ENCODE measurements at regions of chr5 and their contacts with region 1.

Region 1: DNA sequence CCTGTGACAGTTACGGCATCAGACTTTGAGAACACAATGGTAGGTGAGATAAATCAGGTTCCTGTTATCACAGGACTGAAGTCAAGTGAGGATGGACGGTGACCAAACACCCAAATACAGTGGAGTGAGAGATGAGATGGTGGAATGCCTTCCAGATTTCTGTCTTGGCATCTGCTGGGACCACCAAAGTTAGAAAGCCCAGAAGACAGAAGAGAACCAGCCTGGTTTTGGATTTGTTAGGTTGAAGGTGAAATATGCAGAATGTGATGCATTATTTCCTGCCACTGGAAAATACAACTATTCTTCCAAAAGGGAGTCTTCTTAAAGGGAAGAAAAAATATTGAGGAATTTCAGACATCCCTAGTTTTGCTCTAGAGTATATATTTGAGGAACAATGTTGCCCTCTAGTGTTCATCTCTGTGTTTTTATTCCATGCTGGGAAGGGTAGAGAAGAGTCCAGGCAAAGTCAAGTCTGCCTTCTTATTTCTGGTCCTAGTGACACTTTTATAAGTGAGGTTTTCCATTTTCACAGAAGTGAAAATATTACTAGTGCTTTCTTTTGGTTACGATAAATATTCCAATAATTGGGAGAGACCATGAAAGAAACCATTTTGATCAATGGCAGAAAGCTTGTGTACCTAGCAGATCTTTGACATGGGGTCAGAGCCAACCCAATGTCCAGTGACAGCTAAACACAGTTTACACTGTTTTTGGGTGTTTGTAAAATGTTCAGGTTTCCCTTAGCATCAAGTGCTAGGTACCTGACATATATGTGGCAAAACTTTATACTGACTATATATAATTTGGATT is 142.3 kb upstream of the ANKH start:
- DNase-seq: peak; percentile 59
- ATAC-seq: peak; percentile 57
- H3K4me3 ChIP-seq: no peak overlapping the region
- H3K4me3 Mint-ChIP-seq: no peak overlapping the region
- H3K27ac ChIP-seq: no peak overlapping the region
- H3K27ac Mint-ChIP-seq: no peak overlapping the region
- H3K4me1 ChIP-seq: no peaks in the 10 kb centered on the region
- H3K4me1 Mint-ChIP-seq: no peaks in the 10 kb centered on the region
- H3K27me3 ChIP-seq: peaks cover 0 to 3% (median 0%) of the 10 kb centered on the region in 4 experiments
- H3K27me3 Mint-ChIP-seq: peaks cover 9% of the 10 kb centered on the region
- CTCF ChIP-seq: peak; percentile 76

Region 2: DNA sequence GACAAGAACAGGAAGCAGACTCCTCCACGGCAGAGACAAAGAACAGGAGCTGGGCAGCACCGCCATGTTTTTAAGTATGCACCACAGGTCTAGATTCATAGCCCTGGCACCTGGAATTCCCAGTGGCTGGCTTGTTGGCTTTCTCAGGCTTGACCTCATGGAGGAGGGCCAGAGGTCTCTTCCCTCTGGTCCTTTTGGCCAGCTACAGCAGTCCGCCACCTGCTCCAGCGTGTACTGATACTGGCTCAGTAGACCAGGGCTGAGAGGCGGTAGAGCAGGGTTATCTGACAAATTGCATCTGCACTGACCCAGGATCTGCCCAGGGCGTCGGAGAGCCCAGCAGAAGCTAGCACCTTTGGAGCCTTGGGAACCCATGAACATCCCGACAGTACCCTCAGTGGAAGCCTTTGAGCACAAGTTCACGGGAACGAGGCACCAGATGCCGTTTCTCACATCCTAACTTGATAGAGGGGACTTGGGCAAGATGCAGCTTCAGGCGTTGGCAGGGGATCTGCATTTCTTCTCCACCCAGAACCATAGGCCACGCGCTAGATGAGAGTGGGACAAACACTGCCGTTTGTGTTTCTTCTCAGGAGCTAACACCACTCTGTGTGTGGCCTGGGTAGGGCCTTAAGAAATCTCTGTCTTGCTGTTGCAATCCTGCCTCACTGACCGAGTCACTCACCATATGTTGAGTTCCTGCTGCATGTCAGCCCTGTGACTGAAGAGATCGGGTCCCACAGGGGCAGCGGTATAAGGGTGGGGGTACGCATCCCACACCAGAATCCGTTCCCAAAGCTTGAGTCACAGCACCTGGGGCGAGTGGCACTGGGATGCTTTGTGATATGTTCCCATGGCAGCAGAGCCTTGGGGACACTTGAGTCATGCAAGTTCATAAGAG is 522.6 kb before region 1 on chr5:
- CTCF ChIA-PET with region 1: no interaction called
- POLR2A ChIA-PET with region 1: no interaction called
- intact Hi-C with region 1: no loop called
- DNase-seq: no peak
- ATAC-seq: no peak
- H3K4me3 ChIP-seq: no peak overlapping the region
- H3K4me3 Mint-ChIP-seq: no peak overlapping the region
- H3K27ac ChIP-seq: no peak overlapping the region
- H3K27ac Mint-ChIP-seq: no peak overlapping the region
- H3K4me1 ChIP-seq: no peaks in the 10 kb centered on the region
- H3K4me1 Mint-ChIP-seq: no peaks in the 10 kb centered on the region
- H3K27me3 ChIP-seq: no peaks in the 10 kb centered on the region
- H3K27me3 Mint-ChIP-seq: no peaks in the 10 kb centered on the region
- CTCF ChIP-seq: no peak

Region 3: GRCh38 chr5:14685757-14686156 is 328.1 kb before region 1 on chr5:
- CTCF ChIA-PET with region 1: interaction called, 15 read pairs
- POLR2A ChIA-PET with region 1: no interaction called
- intact Hi-C with region 1: no loop called
- DNase-seq: peak; percentile 70
- ATAC-seq: peak; percentile 79
- H3K4me3 ChIP-seq: no peak overlapping the region
- H3K4me3 Mint-ChIP-seq: peak overlapping the region; percentile 8
- H3K27ac ChIP-seq: no peak overlapping the region
- H3K27ac Mint-ChIP-seq: no peak overlapping the region
- H3K4me1 ChIP-seq: peaks cover 5 to 10% of the 10 kb centered on the region in 2 donors
- H3K4me1 Mint-ChIP-seq: peaks cover 9% of the 10 kb centered on the region
- H3K27me3 ChIP-seq: no peaks in the 10 kb centered on the region
- H3K27me3 Mint-ChIP-seq: no peaks in the 10 kb centered on the region
- CTCF ChIP-seq: peak; percentile 74

Region 4: GRCh38 chr5:14768508-14769365 is 245.1 kb before region 1 on chr5:
- CTCF ChIA-PET with region 1: no interaction called
- POLR2A ChIA-PET with region 1: no interaction called
- intact Hi-C with region 1: no loop called
- DNase-seq: no peak
- ATAC-seq: no peak
- H3K4me3 ChIP-seq: no peak overlapping the region
- H3K4me3 Mint-ChIP-seq: no peak overlapping the region
- H3K27ac ChIP-seq: no peak overlapping the region
- H3K27ac Mint-ChIP-seq: no peak overlapping the region
- H3K4me1 ChIP-seq: no peaks in the 10 kb centered on the region
- H3K4me1 Mint-ChIP-seq: peaks cover 14% of the 10 kb centered on the region
- H3K27me3 ChIP-seq: no peaks in the 10 kb centered on the region
- H3K27me3 Mint-ChIP-seq: no peaks in the 10 kb centered on the region
- CTCF ChIP-seq: no peak

Region 5: GRCh38 chr5:14958196-14958595 is 55.7 kb before region 1 on chr5:
- CTCF ChIA-PET with region 1: interaction called, 19 read pairs
- POLR2A ChIA-PET with region 1: no interaction called
- intact Hi-C with region 1: no loop called
- DNase-seq: no peak
- ATAC-seq: no peak
- H3K4me3 ChIP-seq: no peak overlapping the region
- H3K4me3 Mint-ChIP-seq: no peak overlapping the region
- H3K27ac ChIP-seq: no peak overlapping the region
- H3K27ac Mint-ChIP-seq: no peak overlapping the region
- H3K4me1 ChIP-seq: no peaks in the 10 kb centered on the region
- H3K4me1 Mint-ChIP-seq: no peaks in the 10 kb centered on the region
- H3K27me3 ChIP-seq: no peaks in the 10 kb centered on the region
- H3K27me3 Mint-ChIP-seq: peaks cover 5% of the 10 kb centered on the region
- CTCF ChIP-seq: no peak

Region 6: DNA sequence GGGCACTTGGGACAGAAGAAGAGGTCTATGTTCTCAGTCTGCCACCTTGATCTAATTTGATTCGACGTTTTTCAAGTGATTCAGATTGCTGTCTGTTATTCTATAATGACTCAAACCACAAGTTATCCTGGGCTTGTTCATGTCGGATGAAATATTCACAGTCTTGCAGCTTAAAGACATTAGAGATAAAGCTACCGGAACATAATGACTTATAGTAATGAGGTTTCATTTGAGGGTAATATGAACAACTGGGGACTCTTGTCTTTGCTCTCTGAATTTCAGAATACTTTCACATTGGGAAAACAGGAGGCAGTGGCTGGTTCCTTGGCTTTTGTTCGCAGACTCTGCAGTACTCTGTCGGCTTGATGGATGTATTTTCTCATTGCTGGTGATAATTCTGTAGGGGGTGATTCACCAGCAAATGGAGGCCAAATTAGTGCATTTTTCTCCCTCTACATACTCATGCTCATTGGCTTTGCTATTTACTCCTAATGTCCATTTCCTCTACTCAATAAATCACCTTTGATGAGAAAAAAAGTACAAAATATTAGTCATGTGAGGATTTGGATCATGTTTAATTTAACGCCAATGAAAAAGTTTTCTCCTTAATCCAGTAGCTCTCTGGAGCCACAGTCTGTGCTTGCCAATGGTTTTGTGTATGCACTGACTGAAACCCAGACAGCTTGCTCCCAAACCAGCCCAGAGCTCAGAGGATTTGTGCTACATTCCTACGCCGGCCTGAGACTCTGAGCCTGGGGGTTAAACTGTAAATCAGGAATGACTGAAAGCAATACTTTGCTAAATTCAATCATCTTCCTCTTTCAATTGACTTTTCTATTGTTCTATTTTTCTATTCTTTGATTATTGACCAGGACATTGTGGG is 12.4 kb after region 1 on chr5:
- CTCF ChIA-PET with region 1: interaction called, 12 read pairs
- POLR2A ChIA-PET with region 1: no interaction called
- intact Hi-C with region 1: no loop called
- DNase-seq: no peak
- ATAC-seq: no peak
- H3K4me3 ChIP-seq: no peak overlapping the region
- H3K4me3 Mint-ChIP-seq: no peak overlapping the region
- H3K27ac ChIP-seq: no peak overlapping the region
- H3K27ac Mint-ChIP-seq: no peak overlapping the region
- H3K4me1 ChIP-seq: no peaks in the 10 kb centered on the region
- H3K4me1 Mint-ChIP-seq: no peaks in the 10 kb centered on the region
- H3K27me3 ChIP-seq: peaks cover 0 to 13% (median 1%) of the 10 kb centered on the region in 4 experiments
- H3K27me3 Mint-ChIP-seq: peaks cover 59% of the 10 kb centered on the region
- CTCF ChIP-seq: no peak